K562 (cell line): ENCODE measurements at regions of chr5 and their contacts with region 1.

Region 1: DNA sequence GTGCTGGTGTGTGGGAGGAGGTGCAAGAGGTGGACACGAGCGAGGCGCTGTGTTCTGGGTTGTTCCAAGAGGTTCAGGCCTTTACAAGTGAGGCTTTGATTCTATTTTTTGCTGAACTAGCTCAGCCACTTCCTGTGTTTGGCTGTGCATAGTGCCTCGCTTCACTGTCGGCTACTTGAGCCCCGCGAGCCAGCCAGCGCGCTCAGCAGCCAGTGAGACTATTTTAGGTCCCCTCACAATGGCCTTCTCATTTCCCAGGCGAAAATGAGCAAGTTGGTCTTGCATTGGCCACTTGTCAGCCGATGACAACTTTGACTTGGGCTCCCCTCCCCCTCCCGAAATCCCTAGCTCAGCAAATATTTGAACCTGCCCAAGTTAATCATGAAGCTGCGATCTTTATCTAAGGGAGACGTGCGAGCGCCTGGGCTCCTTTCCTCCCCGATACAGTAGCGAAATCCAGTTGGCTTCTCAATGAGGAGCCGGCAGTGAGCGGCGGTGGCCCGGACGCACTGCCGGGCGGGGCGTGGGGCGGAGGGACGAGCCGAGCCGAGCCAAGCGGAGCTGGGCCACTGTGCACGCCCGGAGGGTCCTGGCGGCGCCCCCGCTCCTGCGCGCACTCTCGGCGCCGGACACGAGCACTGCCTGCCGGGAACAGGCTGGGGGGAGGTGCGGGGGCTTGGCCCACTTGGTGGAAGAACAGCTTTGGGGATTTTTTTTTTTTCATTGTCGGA is 72.6 kb downstream of the PIK3R1 start:
- DNase-seq: peak; percentile 12 to 22 (median 21)
- ATAC-seq: peak; percentile 76
- H3K4me3 ChIP-seq: peak overlapping the region; percentile 9; the same call in 1 of the 2 replicates
- H3K27ac ChIP-seq: peak overlapping the region; percentile 31; the same call in 1 of the 3 replicates
- H3K4me1 ChIP-seq: peaks cover 14 to 16% of the 10 kb centered on the region in 2 experiments; a peak in 4 of 5 replicates
- H3K27me3 ChIP-seq: no peaks in the 10 kb centered on the region
- CTCF ChIP-seq: no peak
- EP300 ChIP-seq: no peak
- POLR2A ChIP-seq: no peak
- RAD21 ChIP-seq: no peak

Region 2: DNA sequence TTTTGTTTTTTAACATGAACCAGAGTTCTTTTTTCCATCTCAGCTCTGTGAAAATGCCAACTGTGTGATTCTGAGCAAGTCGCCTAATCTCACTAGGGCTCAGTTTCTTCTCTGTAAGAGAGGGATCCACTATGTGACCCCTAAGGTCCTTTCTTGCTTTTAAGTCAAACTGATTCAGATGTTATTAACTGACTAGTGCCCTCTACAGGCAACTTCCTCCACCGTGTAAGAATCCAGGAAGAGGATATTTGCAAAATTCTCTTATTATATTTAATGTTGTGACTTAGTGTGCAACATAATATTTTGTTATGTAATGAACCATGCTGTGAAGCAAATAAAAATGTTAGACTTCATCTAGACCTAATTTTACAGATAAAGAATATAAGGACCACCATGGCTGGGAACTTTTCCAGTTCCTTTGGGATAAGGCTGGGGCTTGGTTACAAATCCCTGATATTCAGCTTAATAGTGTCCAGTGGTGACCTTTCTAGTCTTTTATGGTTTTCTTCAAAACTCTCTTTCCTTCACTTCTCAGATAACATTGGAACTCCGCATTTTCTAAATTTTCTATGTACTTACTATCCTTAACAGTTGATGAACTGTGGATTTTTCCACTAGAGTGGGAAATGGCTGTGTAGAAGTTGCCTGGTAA is 172.1 kb after region 1 on chr5:
- CTCF ChIA-PET with region 1: interaction called, 9 read pairs
- POLR2A ChIA-PET with region 1: no interaction called
- in situ Hi-C with region 1: loop called (anchors 5 kb)
- intact Hi-C with region 1: loop called (anchors 1 kb)
- DNase-seq: peak; percentile 39 to 86 (median 46)
- ATAC-seq: peak; percentile 85
- H3K4me3 ChIP-seq: no peak overlapping the region
- H3K27ac ChIP-seq: no peak overlapping the region
- H3K4me1 ChIP-seq: peaks cover 0 to 30% of the 10 kb centered on the region in 2 experiments; a peak in 3 of 5 replicates
- H3K27me3 ChIP-seq: no peaks in the 10 kb centered on the region
- CTCF ChIP-seq: peak; percentile 60 to 86 (median 60); a peak in 5 of 6 replicates
- EP300 ChIP-seq: no peak
- POLR2A ChIP-seq: no peak
- RAD21 ChIP-seq: peak; percentile 91 to 95

Region 3: DNA sequence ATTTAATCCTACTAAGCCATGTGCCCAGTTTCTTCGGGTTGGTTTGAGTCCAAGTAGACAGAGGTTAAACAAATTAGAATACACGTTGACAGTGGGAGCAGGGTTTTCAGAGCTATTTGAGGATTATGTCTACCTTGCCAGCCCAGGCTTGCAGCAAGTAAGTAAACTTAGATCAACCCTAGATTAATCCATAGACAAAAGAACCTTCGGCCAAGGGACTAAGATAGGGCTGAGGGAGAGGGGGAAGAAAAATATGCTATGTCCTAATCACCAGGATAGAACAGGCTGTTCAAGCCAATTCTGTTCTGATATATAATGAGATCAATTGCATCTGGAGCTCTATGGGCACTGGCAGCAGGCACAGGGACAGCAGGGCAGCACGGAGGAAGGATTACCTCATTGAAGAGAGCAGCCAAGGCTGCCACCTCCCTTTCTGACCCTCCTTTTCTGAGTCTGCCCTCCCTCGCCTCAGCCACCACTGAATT is 305.1 kb after region 1 on chr5:
- CTCF ChIA-PET with region 1: no interaction called
- POLR2A ChIA-PET with region 1: no interaction called
- in situ Hi-C with region 1: no loop called
- intact Hi-C with region 1: no loop called
- DNase-seq: no peak
- ATAC-seq: no peak
- H3K4me3 ChIP-seq: no peak overlapping the region
- H3K27ac ChIP-seq: no peak overlapping the region
- H3K4me1 ChIP-seq: no peaks in the 10 kb centered on the region
- H3K27me3 ChIP-seq: 0 out of 5 replicates have a peak, but pooled peaks cover 0 to 5% of the 10 kb centered on the region in 2 experiments
- CTCF ChIP-seq: no peak
- EP300 ChIP-seq: no peak
- POLR2A ChIP-seq: no peak
- RAD21 ChIP-seq: no peak

Region 4: DNA sequence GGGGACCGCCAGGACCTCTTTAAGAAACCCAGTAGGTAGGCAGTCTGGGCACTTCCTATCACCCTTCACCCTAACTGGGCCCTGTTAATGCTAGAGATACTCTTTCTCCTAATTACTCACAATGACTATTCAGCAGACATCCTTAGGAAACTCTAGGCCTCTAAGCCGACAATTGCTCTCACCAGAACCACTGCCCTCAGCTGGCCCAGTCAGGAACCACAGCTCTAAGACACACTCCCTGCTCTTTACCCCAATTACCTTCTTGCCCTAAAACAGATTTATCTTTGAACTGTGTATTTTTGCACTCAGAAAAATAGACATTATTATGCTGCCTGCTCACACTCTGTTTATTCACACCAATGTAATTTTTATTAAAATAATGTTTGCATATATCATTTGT is 373.1 kb after region 1 on chr5:
- CTCF ChIA-PET with region 1: no interaction called
- POLR2A ChIA-PET with region 1: no interaction called
- in situ Hi-C with region 1: no loop called
- intact Hi-C with region 1: loop called (anchors 1 kb)
- DNase-seq: peak; percentile 16 to 40 (median 26)
- ATAC-seq: peak; percentile 93
- H3K4me3 ChIP-seq: no peak overlapping the region
- H3K27ac ChIP-seq: no peak overlapping the region
- H3K4me1 ChIP-seq: no peaks in the 10 kb centered on the region
- H3K27me3 ChIP-seq: peaks cover 0 to 7% of the 10 kb centered on the region in 2 experiments; a peak in 2 of 5 replicates
- CTCF ChIP-seq: peak; percentile 49 to 61 (median 51); a peak in 5 of 6 replicates
- EP300 ChIP-seq: no peak
- POLR2A ChIP-seq: no peak
- RAD21 ChIP-seq: peak; percentile 11 to 52; a peak in 2 of 4 replicates

Region 5: GRCh38 chr5:68962757-68963484 is 674.8 kb after region 1 on chr5:
- CTCF ChIA-PET with region 1: interaction called, 15 read pairs
- POLR2A ChIA-PET with region 1: no interaction called
- in situ Hi-C with region 1: loop called (anchors 25 kb)
- intact Hi-C with region 1: loop called (anchors 2 kb)
- DNase-seq: peak; percentile 44 to 66 (median 55)
- ATAC-seq: peak; percentile 95
- H3K4me3 ChIP-seq: no peak overlapping the region
- H3K27ac ChIP-seq: no peak overlapping the region
- H3K4me1 ChIP-seq: no peaks in the 10 kb centered on the region
- H3K27me3 ChIP-seq: peaks cover 5 to 8% of the 10 kb centered on the region in 2 experiments; a peak in 4 of 5 replicates
- CTCF ChIP-seq: peak; percentile 71 to 92 (median 81)
- EP300 ChIP-seq: no peak
- POLR2A ChIP-seq: no peak
- RAD21 ChIP-seq: peak; percentile 79 to 85